GM12878 (cell line): ENCODE measurements at regions of chr12 and their contacts with region 1.

Region 1: GRCh38 chr12:94172973-94173372 is 24.6 kb downstream of the PLXNC1 start:
- DNase-seq: no peak
- ATAC-seq: no peak
- H3K4me3 ChIP-seq: no peak overlapping the region
- H3K27ac ChIP-seq: peak overlapping the region; percentile 92
- H3K4me1 ChIP-seq: peaks cover 47% of the 10 kb centered on the region
- H3K27me3 ChIP-seq: no peaks in the 10 kb centered on the region
- CTCF ChIP-seq: no peak
- EP300 ChIP-seq: no peak
- POLR2A ChIP-seq: no peak
- RAD21 ChIP-seq: no peak

Region 2: GRCh38 chr12:94157981-94158411 is 15.0 kb before region 1 on chr12:
- CTCF ChIA-PET with region 1: interaction called, 7 read pairs
- POLR2A ChIA-PET with region 1: interaction called, 11 read pairs
- RAD21 ChIA-PET with region 1: interaction called, 60 read pairs
- SMC1A ChIA-PET with region 1: interaction called, 367 read pairs
- in situ Hi-C with region 1: no loop called
- intact Hi-C with region 1: no loop called
- DNase-seq: peak; percentile 59
- ATAC-seq: peak; percentile 84
- H3K4me3 ChIP-seq: peak overlapping the region; percentile 54; the same call in 1 of the 2 replicates
- H3K27ac ChIP-seq: peak overlapping the region; percentile 83
- H3K4me1 ChIP-seq: peaks cover 21% of the 10 kb centered on the region
- H3K27me3 ChIP-seq: no peaks in the 10 kb centered on the region
- CTCF ChIP-seq: no peak
- EP300 ChIP-seq: no peak
- POLR2A ChIP-seq: peak; percentile 51
- RAD21 ChIP-seq: no peak

Region 3: GRCh38 chr12:94191023-94191422 is 18.1 kb after region 1 on chr12:
- CTCF ChIA-PET with region 1: interaction called, 11 read pairs
- POLR2A ChIA-PET with region 1: interaction called, 6 read pairs
- RAD21 ChIA-PET with region 1: interaction called, 7 read pairs
- SMC1A ChIA-PET with region 1: interaction called, 21 read pairs
- in situ Hi-C with region 1: no loop called
- intact Hi-C with region 1: no loop called
- DNase-seq: no peak
- ATAC-seq: peak; percentile 83
- H3K4me3 ChIP-seq: no peak overlapping the region
- H3K27ac ChIP-seq: peak overlapping the region; percentile 70
- H3K4me1 ChIP-seq: peaks cover 23% of the 10 kb centered on the region
- H3K27me3 ChIP-seq: no peaks in the 10 kb centered on the region
- CTCF ChIP-seq: no peak
- EP300 ChIP-seq: no peak
- POLR2A ChIP-seq: no peak
- RAD21 ChIP-seq: no peak

Region 4: GRCh38 chr12:94269316-94269999 is 96.5 kb after region 1 on chr12:
- CTCF ChIA-PET with region 1: interaction called, 3 read pairs
- POLR2A ChIA-PET with region 1: interaction called, 4 read pairs
- RAD21 ChIA-PET with region 1: interaction called, 24 read pairs
- SMC1A ChIA-PET with region 1: interaction called, 17 read pairs
- in situ Hi-C with region 1: no loop called
- intact Hi-C with region 1: no loop called
- DNase-seq: no peak
- ATAC-seq: peak; percentile 66
- H3K4me3 ChIP-seq: no peak overlapping the region
- H3K27ac ChIP-seq: 0 out of 2 replicates have a peak overlapping the region, but pooled peaks have one; percentile 15
- H3K4me1 ChIP-seq: peaks cover 61% of the 10 kb centered on the region
- H3K27me3 ChIP-seq: no peaks in the 10 kb centered on the region
- CTCF ChIP-seq: no peak
- EP300 ChIP-seq: no peak
- POLR2A ChIP-seq: no peak
- RAD21 ChIP-seq: no peak